Prostate gland (tissue), 2 donors: ENCODE measurements at regions of chr5 and their contacts with region 1.

Region 1: GRCh38 chr5:14727428-14727865 is 62.9 kb downstream of the OTULIN start:
- DNase-seq: peak; percentile 76
- H3K4me3 ChIP-seq: no peak overlapping the region
- H3K27ac ChIP-seq: peak overlapping the region; percentile 19 to 88
- H3K4me1 ChIP-seq: peaks cover 11% of the 10 kb centered on the region
- H3K27me3 ChIP-seq: no peaks in the 10 kb centered on the region
- CTCF ChIP-seq: peak; percentile 90 to 97 (median 95)
- POLR2A ChIP-seq: no peak

Region 2: DNA sequence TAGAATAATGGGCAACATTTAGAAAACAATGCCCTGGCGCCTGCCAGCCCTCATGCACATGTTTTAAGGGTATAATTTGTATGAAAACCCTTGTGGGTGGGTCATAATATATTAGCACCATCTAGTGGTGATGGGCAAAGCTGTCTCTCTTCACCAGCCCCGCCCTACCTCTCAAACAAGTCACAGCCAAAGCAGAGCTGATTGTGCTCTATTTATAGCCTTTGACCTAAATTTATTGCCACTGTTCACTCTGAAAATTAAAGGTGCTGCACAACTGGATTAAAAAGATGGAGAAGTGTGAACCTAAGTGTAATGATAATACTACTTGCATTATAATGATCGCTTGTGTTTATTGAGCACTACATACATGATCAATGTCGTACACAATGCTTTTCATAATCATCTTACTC is 276.1 kb after region 1 on chr5:
- intact Hi-C with region 1: loop called (anchors 1 kb)
- DNase-seq: peak; percentile 74
- H3K4me3 ChIP-seq: no peak overlapping the region
- H3K27ac ChIP-seq: no peak overlapping the region
- H3K4me1 ChIP-seq: peaks cover 3% of the 10 kb centered on the region
- H3K27me3 ChIP-seq: no peaks in the 10 kb centered on the region
- CTCF ChIP-seq: peak; percentile 43 to 92 (median 89)
- POLR2A ChIP-seq: no peak

Region 3: GRCh38 chr5:15183522-15183921 is 456.1 kb after region 1 on chr5:
- intact Hi-C with region 1: loop called (anchors 10 kb)
- DNase-seq: no peak
- H3K4me3 ChIP-seq: no peak overlapping the region
- H3K27ac ChIP-seq: no peak overlapping the region
- H3K4me1 ChIP-seq: no peaks in the 10 kb centered on the region
- H3K27me3 ChIP-seq: no peaks in the 10 kb centered on the region
- CTCF ChIP-seq: no peak
- POLR2A ChIP-seq: no peak